ENCODE measurements at regions of chr10 and their contacts with region 1.

Region 1: DNA sequence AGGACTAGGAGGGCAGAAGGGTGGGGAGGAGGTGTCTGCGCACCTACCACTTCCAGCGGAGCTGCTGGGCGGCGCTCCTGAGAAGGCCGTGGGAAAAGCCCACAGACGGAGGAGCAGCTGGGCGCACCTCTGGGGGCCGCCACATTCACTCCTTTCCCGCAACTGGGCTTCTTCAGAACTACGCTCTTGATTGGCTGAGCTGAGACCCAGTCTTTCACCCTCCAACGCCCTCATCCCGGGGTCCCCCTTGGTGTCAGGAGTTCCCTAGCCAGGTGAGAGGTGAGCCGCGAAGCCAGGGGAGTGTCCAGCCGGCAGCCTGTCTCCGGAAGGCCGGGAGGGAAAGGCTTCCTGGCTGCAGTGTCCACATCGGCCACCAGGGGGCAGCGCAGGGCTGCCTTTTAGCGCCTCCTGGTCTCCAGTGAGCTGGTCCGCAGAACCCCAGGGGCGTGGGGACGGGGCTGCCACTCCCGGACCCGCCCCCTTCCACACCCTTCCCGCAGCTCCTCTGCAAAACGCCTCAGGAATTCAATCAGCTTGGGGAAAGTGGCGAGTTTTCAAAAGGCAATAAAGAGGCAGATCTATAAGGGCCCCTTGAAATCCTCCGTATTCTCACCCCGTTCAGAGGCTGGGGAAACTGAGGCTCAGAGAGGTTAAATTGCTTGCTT is 98.8 kb downstream of the CHST15 start:
- DNase-seq: peak; percentile 55 to 71
- ATAC-seq: peak; percentile 65 to 76
- H3K4me3 ChIP-seq: peak overlapping the region in 2 of 4 donors; percentile 1 to 7
- H3K27ac ChIP-seq: no peak overlapping the region
- H3K4me1 ChIP-seq: peaks cover 0 to 16% of the 10 kb centered on the region in 2 donors
- H3K27me3 ChIP-seq: peaks cover 20 to 34% (median 26%) of the 10 kb centered on the region in 3 donors
- CTCF ChIP-seq: peak; percentile 96 to 99 (median 98)
- POLR2A ChIP-seq: no peak

Region 2: GRCh38 chr10:123607386-123607785 is 387.2 kb before region 1 on chr10:
- in situ Hi-C with region 1: no loop called
- intact Hi-C with region 1: no loop called
- DNase-seq: no peak
- ATAC-seq: no peak
- H3K4me3 ChIP-seq: no peak overlapping the region
- H3K27ac ChIP-seq: no peak overlapping the region
- H3K4me1 ChIP-seq: no peaks in the 10 kb centered on the region
- H3K27me3 ChIP-seq: peaks cover 0 to 7% (median 3%) of the 10 kb centered on the region in 3 donors
- CTCF ChIP-seq: no peak
- POLR2A ChIP-seq: no peak

Region 3: DNA sequence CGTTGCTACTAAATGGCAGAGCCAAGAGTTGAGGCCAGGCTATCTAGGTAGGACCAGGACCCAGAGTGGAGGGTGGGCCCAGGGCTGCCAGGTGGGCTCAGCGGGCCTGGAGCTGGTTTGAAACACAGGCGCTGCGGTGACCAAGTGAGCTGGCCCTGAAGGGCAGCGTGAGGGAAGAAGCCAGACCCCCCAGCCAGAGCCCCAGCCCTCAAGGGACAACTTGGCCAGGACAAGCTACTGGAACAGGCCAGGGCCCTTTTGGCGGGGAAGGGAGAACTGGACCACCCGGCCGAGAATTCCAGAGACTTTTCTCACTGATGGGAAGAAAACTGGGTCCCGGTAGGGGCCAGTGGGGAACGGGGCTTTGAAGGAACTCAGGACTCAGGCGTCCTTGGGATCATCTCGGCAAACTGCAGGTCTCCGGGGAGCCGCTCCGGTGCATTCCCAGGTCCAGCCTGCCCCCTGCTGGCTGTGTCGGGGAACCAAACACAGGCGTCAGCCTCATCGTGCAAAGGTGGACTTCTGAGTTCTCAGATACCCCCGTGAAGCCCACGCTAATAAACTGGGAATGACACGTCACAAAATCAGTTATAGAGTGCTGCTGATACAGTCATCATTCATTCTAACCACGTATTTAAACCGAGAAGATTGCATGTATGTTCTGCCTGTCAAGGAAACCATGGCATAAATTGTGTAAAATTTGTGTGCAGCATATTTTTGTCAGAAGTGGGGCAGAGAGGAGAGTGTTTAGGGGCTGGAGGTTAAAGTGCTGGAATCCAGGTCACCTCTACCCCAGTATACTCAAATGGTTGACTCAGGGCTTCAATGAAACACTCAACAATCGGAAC is 26.9 kb before region 1 on chr10:
- in situ Hi-C with region 1: no loop called
- intact Hi-C with region 1: no loop called
- DNase-seq: peak; percentile 29 to 35
- ATAC-seq: peak in 1 of 2 donors; percentile 64
- H3K4me3 ChIP-seq: no peak overlapping the region
- H3K27ac ChIP-seq: no peak overlapping the region
- H3K4me1 ChIP-seq: no peaks in the 10 kb centered on the region
- H3K27me3 ChIP-seq: peaks cover 23 to 46% (median 32%) of the 10 kb centered on the region in 3 donors
- CTCF ChIP-seq: peak; percentile 72 to 86 (median 75)
- POLR2A ChIP-seq: no peak

Region 4: DNA sequence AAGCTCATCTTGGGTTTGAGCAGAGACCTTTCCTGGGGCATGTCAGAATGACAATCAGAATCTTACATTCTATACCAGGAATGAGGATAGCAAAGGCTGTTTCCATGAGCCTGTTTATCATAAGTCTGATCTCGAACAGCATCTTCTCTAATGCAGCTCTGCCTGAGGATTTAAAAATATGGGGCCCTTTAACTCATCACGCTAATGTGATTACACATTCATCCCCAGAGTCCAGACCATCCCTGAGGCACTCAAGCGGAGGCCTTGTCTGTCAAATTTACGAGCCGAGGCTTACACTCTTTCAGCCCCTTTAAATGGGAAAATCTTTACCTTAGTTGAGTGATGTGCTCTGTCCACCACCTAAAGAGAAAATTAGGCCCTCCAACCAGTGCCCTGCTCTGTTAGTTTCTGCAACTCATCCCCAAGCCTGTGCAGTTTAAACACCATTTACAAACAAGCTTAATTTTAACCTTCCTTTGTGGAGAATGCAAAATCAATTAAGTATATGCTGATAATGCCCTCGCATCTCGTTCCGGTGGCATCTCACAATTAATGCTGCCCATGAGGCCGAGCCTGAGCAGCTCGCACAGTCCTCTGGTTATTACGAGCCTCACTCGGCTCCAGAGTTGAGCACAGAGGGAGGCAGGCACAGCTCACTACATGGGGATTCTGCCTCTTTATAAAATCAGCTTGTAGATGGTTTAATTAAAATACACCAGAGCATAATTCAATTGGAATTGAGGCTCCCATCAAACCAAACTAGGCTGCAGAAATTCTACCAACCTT is 82.9 kb after region 1 on chr10:
- in situ Hi-C with region 1: no loop called
- intact Hi-C with region 1: no loop called
- DNase-seq: no peak
- ATAC-seq: no peak
- H3K4me3 ChIP-seq: no peak overlapping the region
- H3K27ac ChIP-seq: no peak overlapping the region
- H3K4me1 ChIP-seq: peaks cover 5 to 26% of the 10 kb centered on the region in 2 donors
- H3K27me3 ChIP-seq: no peaks in the 10 kb centered on the region
- CTCF ChIP-seq: no peak
- POLR2A ChIP-seq: no peak

Region 5: GRCh38 chr10:124152916-124153826 is 158.6 kb after region 1 on chr10:
- in situ Hi-C with region 1: no loop called
- intact Hi-C with region 1: loop called (anchors 5 kb)
- DNase-seq: peak; percentile 53 to 54
- ATAC-seq: peak; percentile 66 to 78
- H3K4me3 ChIP-seq: peak overlapping the region in 1 of 4 donors; percentile 16
- H3K27ac ChIP-seq: peak overlapping the region; percentile 73 to 82 (median 74)
- H3K4me1 ChIP-seq: peaks cover 47 to 55% of the 10 kb centered on the region in 2 donors
- H3K27me3 ChIP-seq: no peaks in the 10 kb centered on the region
- CTCF ChIP-seq: no peak
- POLR2A ChIP-seq: no peak

Region 6: DNA sequence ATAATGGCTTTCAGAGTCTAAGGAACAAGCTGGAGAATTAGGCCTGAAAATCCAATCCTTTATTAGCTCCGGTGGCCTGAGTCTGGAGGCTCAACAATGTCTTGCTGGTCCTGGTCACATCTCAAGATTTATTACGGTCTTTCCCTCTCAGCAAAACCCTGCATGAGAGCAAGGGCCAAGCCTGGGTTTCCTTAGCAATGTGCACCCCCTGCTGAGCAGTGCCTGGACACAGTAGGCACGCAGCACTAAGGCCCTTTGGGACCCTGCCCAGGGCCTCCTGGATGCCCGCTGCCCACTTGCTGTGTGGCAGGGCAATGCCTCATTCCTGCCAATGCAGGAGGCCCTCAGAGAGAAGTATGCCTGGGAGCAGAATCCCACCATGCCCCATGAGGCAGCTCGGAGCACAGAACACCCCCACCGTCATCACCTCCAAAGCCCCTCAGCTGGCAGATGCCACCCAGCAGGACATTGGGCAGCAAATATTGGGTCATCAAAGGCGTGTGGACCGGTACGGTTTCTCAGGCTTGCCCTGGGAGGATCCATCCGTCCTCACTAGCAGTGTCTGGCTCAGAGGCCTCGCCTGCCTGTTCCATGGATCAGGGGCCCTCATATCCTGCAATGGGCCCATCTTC is 267.8 kb after region 1 on chr10:
- in situ Hi-C with region 1: loop called in 1 of 4 experiments (anchors 10 kb)
- intact Hi-C with region 1: loop called (anchors 1 kb)
- DNase-seq: peak in 1 of 2 donors; percentile 12
- ATAC-seq: peak in 1 of 2 donors; percentile 70
- H3K4me3 ChIP-seq: no peak overlapping the region
- H3K27ac ChIP-seq: no peak overlapping the region
- H3K4me1 ChIP-seq: no peaks in the 10 kb centered on the region
- H3K27me3 ChIP-seq: no peaks in the 10 kb centered on the region
- CTCF ChIP-seq: peak in 4 of 5 experiments; percentile 23 to 41 (median 38)
- POLR2A ChIP-seq: no peak

Region 7: GRCh38 chr10:124267231-124267885 is 272.8 kb after region 1 on chr10:
- in situ Hi-C with region 1: loop called in 1 of 4 experiments (anchors 10 kb)
- intact Hi-C with region 1: loop called (anchors 1 kb)
- DNase-seq: no peak
- ATAC-seq: no peak
- H3K4me3 ChIP-seq: no peak overlapping the region
- H3K27ac ChIP-seq: no peak overlapping the region
- H3K4me1 ChIP-seq: no peaks in the 10 kb centered on the region
- H3K27me3 ChIP-seq: no peaks in the 10 kb centered on the region
- CTCF ChIP-seq: no peak
- POLR2A ChIP-seq: no peak

Region 8: GRCh38 chr10:124388823-124389612 is 394.5 kb after region 1 on chr10:
- in situ Hi-C with region 1: loop called (anchors 5 kb)
- intact Hi-C with region 1: loop called (anchors 1 kb)
- DNase-seq: peak; percentile 67 to 79
- ATAC-seq: peak; percentile 93 to 95
- H3K4me3 ChIP-seq: peak overlapping the region; percentile 57 to 68 (median 62)
- H3K27ac ChIP-seq: peak overlapping the region in 2 of 4 donors; percentile 26 to 47
- H3K4me1 ChIP-seq: peaks cover 0 to 9% of the 10 kb centered on the region in 2 donors
- H3K27me3 ChIP-seq: no peaks in the 10 kb centered on the region
- CTCF ChIP-seq: peak; percentile 88 to 99 (median 95)
- POLR2A ChIP-seq: no peak